ENCODE measurements at regions of chr7 and their contacts with region 1.

Region 1: GRCh38 chr7:92904292-92905131 is 68.1 kb upstream of the CDK6 start:
- DNase-seq: peak; percentile 82
- H3K4me3 Mint-ChIP-seq: peak overlapping the region; percentile 55
- H3K27ac Mint-ChIP-seq: peak overlapping the region; percentile 94
- H3K4me1 Mint-ChIP-seq: peaks cover 28% of the 10 kb centered on the region
- H3K27me3 Mint-ChIP-seq: no peaks in the 10 kb centered on the region

Region 2: GRCh38 chr7:92528188-92528957 is 376.1 kb before region 1 on chr7 and contains the starts of genes PEX1 and RBM48:
- intact Hi-C with region 1: loop called (anchors 1 kb)
- DNase-seq: peak; percentile 94
- H3K4me3 Mint-ChIP-seq: peak within 1 kb of the TSS; percentile 91
- H3K27ac Mint-ChIP-seq: peak within 1 kb of the TSS; percentile 94
- H3K4me1 Mint-ChIP-seq: peaks cover 24% of the 10 kb centered on the region
- H3K27me3 Mint-ChIP-seq: no peaks in the 10 kb centered on the region
- total RNA-seq, gene PEX1: 14.7 and 17.0 TPM in 2 replicates
- total RNA-seq, gene RBM48: 17.2 and 17.6 TPM in 2 replicates

Region 3: GRCh38 chr7:92641921-92642511 is 262.5 kb before region 1 on chr7:
- intact Hi-C with region 1: loop called (anchors 1 kb)
- DNase-seq: peak; percentile 64
- H3K4me3 Mint-ChIP-seq: peak overlapping the region; percentile 58
- H3K27ac Mint-ChIP-seq: peak overlapping the region; percentile 97
- H3K4me1 Mint-ChIP-seq: peaks cover 87% of the 10 kb centered on the region
- H3K27me3 Mint-ChIP-seq: no peaks in the 10 kb centered on the region

Region 4: GRCh38 chr7:92708111-92709042 is 196.1 kb before region 1 on chr7:
- intact Hi-C with region 1: loop called (anchors 5 kb)
- DNase-seq: no peak
- H3K4me3 Mint-ChIP-seq: no peak overlapping the region
- H3K27ac Mint-ChIP-seq: peak overlapping the region; percentile 84
- H3K4me1 Mint-ChIP-seq: peaks cover 59% of the 10 kb centered on the region
- H3K27me3 Mint-ChIP-seq: no peaks in the 10 kb centered on the region

Region 5: DNA sequence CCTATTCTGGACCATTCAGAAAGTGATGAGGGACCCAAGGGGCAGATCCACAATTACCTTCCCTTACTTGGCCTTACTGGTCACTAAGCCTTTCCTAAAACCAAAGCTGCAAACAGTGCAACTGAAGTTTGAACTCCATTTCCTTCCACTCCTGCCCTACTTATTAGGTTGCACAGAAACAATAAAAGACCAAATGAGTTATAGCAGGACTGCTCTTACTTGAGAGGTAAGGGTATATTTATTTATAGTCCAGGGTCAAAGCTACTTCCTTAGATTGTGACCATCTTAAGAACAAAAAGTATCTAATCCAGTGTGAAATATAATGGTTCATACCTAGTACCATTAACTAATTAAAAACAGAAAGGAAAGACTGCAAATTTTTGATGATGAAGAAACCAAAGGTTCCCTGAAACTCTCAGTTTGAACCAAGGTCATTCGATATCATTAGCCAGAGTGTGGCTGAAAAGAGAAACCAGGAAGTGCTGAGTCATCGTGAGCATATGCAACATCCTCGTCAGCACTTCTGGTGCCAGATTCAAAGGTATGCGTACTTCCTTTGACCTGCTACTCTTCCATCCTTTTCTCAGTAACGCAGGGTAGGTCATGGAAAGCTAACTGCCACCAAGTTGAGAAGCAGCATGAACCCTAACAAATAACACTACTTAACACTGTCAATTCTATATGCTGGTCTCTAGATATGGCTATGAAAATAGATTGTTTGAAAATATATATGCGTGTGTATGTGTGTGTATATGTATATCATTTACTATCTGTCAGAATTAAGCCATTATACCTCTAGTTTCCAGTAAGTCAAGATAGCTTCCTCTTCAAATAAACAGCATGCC is 94.9 kb before region 1 on chr7:
- intact Hi-C with region 1: loop called (anchors 1 kb)
- DNase-seq: peak; percentile 72
- H3K4me3 Mint-ChIP-seq: peak overlapping the region; percentile 66
- H3K27ac Mint-ChIP-seq: peak overlapping the region; percentile 93
- H3K4me1 Mint-ChIP-seq: peaks cover 93% of the 10 kb centered on the region
- H3K27me3 Mint-ChIP-seq: no peaks in the 10 kb centered on the region

Region 6: GRCh38 chr7:92916674-92917224 is 12.2 kb after region 1 on chr7:
- intact Hi-C with region 1: no loop called
- DNase-seq: no peak
- H3K4me3 Mint-ChIP-seq: no peak overlapping the region
- H3K27ac Mint-ChIP-seq: no peak overlapping the region
- H3K4me1 Mint-ChIP-seq: no peaks in the 10 kb centered on the region
- H3K27me3 Mint-ChIP-seq: no peaks in the 10 kb centered on the region

Region 7: DNA sequence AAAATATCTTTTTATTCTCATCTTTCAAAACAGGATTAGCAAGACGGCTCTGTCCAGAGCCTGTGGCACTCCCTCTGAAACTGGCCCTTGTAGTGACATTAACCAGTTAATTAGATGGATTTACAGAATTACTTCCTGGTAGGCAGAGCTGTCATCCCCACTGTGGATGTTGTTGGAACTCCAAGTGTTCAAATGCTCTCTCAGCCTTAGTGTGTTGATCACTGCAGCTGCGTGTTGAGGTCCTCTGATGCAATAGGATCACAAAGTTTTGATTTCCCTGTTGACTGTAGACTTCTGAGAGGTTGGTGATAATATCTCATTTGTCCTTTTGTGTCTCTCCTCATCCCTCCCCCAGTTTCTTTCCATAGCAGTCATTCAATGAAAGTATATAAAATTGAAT is 49.1 kb after region 1 on chr7:
- intact Hi-C with region 1: loop called (anchors 1 kb)
- DNase-seq: no peak
- H3K4me3 Mint-ChIP-seq: no peak overlapping the region
- H3K27ac Mint-ChIP-seq: peak overlapping the region; percentile 40
- H3K4me1 Mint-ChIP-seq: peaks cover 34% of the 10 kb centered on the region
- H3K27me3 Mint-ChIP-seq: peaks cover 1% of the 10 kb centered on the region

Region 8: GRCh38 chr7:93117852-93118530 is 213.5 kb after region 1 on chr7 and contains the start of gene SAMD9:
- intact Hi-C with region 1: loop called (anchors 1 kb)
- DNase-seq: peak; percentile 63
- H3K4me3 Mint-ChIP-seq: peak within 1 kb of the TSS; percentile 91
- H3K27ac Mint-ChIP-seq: peak within 1 kb of the TSS; percentile 82
- H3K4me1 Mint-ChIP-seq: peaks cover 60% of the 10 kb centered on the region
- H3K27me3 Mint-ChIP-seq: no peaks in the 10 kb centered on the region
- total RNA-seq, gene SAMD9: 11.5 and 11.8 TPM in 2 replicates

Measured in activated T-helper 1 cell treated with anti-CD3 and anti-CD28 coated beads, Interleukin-12 subunit alpha, Interleukin-12 subunit beta, Interleukin-2, Interleukin-4 antibody, amounts not matched to agents 30 ng/mL and 10 ng/mL and 1 ng/mL, durations not matched to agents 14 hours and 24 hours and 36 hours (primary cell).